Activated CD4-positive, alpha-beta memory T cell treated with anti-CD3 and anti-CD28 coated beads for 36 hours (primary cell): ENCODE measurements at regions of chr6 and their contacts with region 1.

Region 1: DNA sequence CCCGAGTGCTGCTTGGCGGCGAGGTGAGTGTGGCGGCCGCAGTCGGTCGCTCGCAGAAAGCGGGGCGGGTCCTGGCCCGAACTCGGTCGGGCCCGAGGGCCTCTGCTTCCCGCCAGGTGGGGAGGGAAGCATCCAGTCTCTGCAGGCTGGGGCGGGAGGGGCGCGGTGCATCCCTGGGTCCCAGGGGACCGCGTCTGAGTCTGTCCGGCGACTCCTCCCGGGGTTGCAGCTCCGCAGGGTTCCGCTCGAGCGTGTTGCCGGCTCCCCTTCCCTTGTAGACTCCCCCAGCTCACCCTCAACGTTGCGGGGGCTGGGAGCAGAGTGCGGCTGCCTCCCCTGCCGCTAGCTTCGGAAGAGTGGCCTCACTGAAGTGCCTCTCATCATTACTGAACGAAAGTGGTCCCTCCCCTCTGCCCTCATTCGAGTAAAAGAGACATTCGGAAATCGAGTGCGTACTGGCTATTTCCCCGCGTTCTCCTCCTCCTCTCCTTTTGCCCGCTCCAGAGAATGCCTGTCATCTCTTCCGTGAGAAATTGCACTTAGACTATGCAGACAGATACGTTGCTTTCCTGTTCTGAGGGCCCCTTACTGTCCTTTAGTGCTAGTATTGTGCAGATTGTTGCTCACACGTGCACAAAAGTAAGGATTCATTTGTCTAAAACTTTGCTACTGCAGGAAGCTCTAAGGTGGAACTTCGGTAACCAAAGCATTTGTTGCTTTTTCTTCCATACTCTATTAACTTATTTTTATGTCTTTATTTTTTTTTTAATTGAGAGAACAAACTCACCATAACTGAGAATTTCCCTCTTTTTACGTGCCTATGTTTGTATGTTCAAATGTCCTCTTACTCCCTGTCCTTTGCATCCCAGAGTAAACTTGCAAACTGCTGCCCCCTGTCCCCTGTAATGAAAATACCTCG is 751 bp downstream of the MAP3K4 start:
- DNase-seq: peak; percentile 45
- H3K4me3 Mint-ChIP-seq: peak overlapping the region; percentile 87
- H3K27ac Mint-ChIP-seq: peak overlapping the region; percentile 88
- H3K4me1 Mint-ChIP-seq: peaks cover 40% of the 10 kb centered on the region
- H3K27me3 Mint-ChIP-seq: peaks cover 2% of the 10 kb centered on the region

Region 2: GRCh38 chr6:160930547-160931377 is 61.6 kb before region 1 on chr6:
- CTCF ChIA-PET with region 1: interaction called, 51 read pairs
- POLR2A ChIA-PET with region 1: no interaction called
- intact Hi-C with region 1: no loop called
- DNase-seq: peak; percentile 67
- H3K4me3 Mint-ChIP-seq: peak overlapping the region; percentile 44
- H3K27ac Mint-ChIP-seq: no peak overlapping the region
- H3K4me1 Mint-ChIP-seq: peaks cover 6% of the 10 kb centered on the region
- H3K27me3 Mint-ChIP-seq: peaks cover 37% of the 10 kb centered on the region

Region 3: DNA sequence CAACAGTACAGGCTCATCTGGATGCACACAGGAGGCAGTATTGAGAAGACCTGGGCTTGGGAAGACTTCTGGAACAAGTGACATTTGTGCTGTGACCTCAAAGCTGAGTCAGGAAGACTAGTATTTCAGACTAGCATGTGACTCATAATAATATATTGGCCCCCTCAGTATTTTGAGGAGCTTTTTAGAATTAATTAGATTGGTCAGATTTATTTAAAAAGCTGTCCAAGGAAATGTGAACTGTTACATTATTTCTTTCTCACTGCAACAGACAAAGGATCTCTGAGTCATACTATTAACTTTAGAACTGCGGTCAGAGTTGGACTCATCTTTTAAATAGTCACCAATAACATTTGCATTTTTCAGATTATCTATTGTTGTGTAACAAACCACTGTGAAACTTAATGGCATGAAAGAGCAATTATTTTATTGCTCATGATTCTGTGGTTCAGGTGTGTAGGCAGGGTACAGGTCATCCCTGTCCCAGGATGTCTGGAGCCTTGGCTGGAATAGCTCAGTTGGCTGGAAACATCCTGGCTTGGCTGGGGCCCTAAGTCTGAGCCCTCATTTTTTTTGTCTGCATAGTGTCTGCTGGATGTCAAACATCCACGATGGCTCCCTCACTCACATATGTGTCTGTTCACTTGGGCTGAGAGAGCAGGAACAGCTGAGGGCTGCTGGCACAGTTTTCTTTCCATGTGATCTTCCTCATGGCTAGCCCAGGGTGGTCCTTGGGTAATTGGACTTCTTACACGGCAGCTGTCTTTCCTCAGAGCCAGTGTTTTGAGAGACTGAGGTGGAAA is 46.1 kb after region 1 on chr6:
- CTCF ChIA-PET with region 1: interaction called, 3 read pairs
- POLR2A ChIA-PET with region 1: interaction called, 3 read pairs
- intact Hi-C with region 1: loop called (anchors 5 kb)
- DNase-seq: no peak
- H3K4me3 Mint-ChIP-seq: no peak overlapping the region
- H3K27ac Mint-ChIP-seq: no peak overlapping the region
- H3K4me1 Mint-ChIP-seq: peaks cover 42% of the 10 kb centered on the region
- H3K27me3 Mint-ChIP-seq: no peaks in the 10 kb centered on the region

Region 4: DNA sequence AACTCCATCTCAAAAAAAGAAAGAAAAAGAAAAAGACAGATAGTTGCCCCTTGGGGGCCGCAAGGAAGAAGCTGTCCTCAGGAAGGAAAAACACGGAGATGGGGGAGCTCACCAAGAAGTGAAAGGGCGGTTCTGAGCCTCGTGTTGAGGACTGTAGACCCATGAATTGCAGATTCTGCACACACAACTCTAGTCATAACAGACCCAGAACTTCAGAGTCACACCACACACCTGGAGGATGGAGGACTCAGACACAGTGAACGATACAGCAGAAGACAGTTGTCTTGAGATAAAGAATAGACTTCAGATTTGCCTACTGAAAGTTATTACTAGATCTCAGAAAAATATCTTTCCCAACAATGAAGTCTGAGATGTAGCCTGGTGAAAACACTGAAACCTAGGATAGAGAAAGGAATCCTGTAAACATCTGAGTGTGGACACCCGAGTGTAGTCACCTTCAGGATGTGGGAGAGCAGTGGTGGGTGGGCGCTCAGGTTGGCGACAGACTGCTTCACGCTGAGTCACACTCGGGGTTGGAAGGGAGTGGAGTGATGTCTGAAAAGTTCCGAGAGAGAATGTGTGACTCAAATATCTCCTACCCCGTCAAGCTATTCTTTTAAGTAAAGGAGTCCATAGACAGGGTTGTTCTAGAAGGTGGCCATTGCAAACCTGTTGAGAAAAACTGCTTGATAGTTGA is 87.4 kb after region 1 on chr6:
- CTCF ChIA-PET with region 1: no interaction called
- POLR2A ChIA-PET with region 1: interaction called, 3 read pairs
- intact Hi-C with region 1: loop called (anchors 2 kb)
- DNase-seq: peak; percentile 89
- H3K4me3 Mint-ChIP-seq: peak overlapping the region; percentile 35
- H3K27ac Mint-ChIP-seq: no peak overlapping the region
- H3K4me1 Mint-ChIP-seq: peaks cover 6% of the 10 kb centered on the region
- H3K27me3 Mint-ChIP-seq: no peaks in the 10 kb centered on the region

Region 5: DNA sequence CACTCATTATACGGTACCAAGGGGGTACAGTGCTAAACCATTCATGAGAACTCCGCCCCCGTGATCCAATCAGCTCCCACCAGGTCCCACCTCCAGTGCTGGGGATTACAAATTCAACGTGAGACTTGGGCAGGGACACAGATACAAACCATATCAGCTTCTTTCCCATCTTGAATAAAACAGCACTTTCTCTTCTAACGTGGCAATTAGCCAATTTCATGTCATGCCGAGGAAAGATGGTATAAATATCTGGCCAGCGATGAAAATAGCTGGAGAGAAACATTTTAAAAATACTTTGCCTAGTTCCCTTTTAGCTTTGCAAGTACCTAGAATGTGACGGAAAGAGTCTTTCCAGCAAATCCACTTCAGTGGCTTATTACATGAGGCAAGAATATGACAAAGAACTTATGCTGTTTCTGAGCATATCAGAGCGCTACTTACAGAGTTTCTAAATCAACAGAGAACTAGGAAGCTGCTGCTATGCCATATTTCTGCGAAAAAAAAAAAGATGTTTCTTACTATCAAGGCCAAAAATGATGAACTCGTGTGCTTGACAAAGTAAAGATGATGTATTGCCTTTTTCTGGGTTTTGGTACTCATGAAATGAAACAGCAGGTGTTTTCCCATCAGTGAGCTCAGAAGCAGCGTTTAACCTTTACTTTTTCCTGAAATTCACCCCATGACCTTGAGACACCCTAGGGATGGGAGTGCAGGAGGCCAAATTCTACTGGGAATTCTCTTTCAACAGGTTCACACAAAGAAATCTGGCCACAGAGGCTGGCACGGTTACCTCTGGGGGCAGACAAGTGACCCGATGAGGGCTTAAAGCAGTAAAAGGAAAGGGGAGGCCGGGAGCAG is 243.7 kb after region 1 on chr6:
- CTCF ChIA-PET with region 1: no interaction called
- POLR2A ChIA-PET with region 1: no interaction called
- intact Hi-C with region 1: loop called (anchors 5 kb)
- DNase-seq: peak; percentile 15
- H3K4me3 Mint-ChIP-seq: no peak overlapping the region
- H3K27ac Mint-ChIP-seq: peak overlapping the region; percentile 56
- H3K4me1 Mint-ChIP-seq: peaks cover 29% of the 10 kb centered on the region
- H3K27me3 Mint-ChIP-seq: no peaks in the 10 kb centered on the region